ENCODE measurements at regions of chr19 and their contacts with region 1.

Region 1: GRCh38 chr19:1490311-1491113 is at the start of gene PCSK4:
- DNase-seq: peak; percentile 99
- ATAC-seq: peak; percentile 96
- H3K4me3 ChIP-seq: peak within 1 kb of the TSS; percentile 18 to 54
- H3K27ac ChIP-seq: no peak within 1 kb of the TSS
- H3K4me1 ChIP-seq: no peaks in the 10 kb centered on the region
- H3K27me3 ChIP-seq: no peaks in the 10 kb centered on the region
- total RNA-seq, gene PCSK4: 3.1 TPM in 1 of 2 donors, not detected in the other

Region 2: DNA sequence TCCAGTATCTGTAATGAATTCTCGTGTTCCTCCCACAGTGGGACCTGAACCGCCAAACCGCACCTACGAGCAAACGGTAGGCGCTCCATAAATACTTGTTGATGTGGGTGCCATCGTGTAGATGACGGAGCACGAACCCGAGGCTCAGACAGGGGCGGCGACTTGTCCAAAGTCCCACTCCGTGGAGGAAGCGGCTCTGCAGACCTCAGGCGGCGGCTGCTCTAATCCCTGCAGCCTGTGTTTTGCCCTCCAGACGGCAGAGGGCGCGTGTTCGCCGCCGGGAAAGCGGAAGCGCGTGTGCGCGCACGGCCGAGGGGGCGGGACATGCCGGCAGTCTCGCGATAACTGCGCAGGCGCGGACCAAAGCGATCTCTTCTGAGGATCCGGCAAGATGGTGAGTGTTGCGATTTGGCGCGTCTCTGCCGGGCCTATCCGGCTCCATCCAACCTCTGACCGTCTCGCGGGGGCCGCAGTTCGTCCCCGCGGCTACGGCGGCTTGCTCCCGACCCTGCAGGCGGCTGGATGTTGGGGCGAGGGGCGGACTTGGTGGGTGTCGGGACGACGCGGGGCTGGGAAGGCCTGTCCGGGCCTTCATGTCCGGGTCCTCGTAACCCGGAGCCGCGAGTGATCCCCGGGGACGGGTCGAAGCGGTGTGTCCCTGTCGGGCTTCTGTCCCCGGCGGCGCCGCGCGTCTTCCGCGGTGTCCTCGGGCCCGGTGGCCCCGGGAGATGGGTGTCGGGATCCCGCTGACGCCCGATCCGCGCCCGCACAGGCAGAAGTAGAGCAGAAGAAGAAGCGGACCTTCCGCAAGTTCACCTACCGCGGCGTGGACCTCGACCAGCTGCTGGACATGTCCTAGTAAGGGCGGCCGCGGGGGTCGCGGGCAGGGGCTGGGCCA is 52.2 kb before region 1 on chr19 and contains the start of gene RPS15:
- intact Hi-C with region 1: loop called in 1 of 2 experiments (anchors 2 kb)
- DNase-seq: peak; percentile 97 to 99
- ATAC-seq: peak; percentile 97
- H3K4me3 ChIP-seq: peak within 1 kb of the TSS; percentile 31 to 82
- H3K27ac ChIP-seq: peak within 1 kb of the TSS in 1 of 2 donors; percentile 11
- H3K4me1 ChIP-seq: no peaks in the 10 kb centered on the region
- H3K27me3 ChIP-seq: no peaks in the 10 kb centered on the region
- total RNA-seq, gene RPS15: 707 to 750 TPM

Region 3: DNA sequence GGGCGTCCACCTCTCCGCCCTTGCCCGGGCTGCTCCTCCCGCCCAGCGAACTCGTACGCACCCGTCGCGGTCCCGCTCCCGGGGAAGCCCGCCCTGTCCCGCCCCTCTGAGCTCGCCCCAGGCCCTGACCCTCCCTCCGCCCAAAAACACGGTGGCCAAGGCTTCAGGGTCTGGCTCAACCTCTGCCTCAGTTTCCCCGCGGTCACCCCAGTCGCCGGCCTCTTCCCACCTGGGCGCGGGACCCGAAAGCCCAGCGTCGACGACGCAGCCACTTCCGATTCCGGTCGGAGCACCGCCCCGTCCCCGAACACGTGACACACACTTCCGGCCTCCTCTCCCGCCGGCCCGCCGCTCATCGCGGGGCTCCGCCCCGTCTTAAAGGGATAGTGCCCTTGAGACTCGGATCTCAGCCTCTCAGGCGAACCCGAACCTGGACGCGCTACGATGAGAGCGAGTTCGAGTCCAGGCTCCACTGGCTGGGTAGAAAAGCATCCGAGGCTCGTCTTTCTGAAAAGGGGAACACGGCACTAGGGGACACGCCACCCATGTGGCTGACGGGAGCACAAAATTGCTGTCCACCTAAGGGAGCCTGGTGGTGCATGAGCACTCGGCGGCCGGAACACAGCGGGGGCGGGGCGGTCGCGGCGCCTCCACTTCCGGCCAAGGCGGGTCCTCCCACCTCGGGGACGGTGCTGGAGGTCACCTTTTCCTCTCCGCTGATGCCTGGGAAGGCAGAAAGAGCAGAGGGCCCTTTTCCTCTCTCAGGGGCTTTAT is 11.4 kb before region 1 on chr19 and contains the start of gene C19orf25:
- intact Hi-C with region 1: loop called in 1 of 2 experiments (anchors 1 kb)
- DNase-seq: peak; percentile 97 to 99
- ATAC-seq: peak; percentile 96
- H3K4me3 ChIP-seq: peak within 1 kb of the TSS; percentile 86 to 89
- H3K27ac ChIP-seq: no peak within 1 kb of the TSS
- H3K4me1 ChIP-seq: no peaks in the 10 kb centered on the region
- H3K27me3 ChIP-seq: no peaks in the 10 kb centered on the region
- total RNA-seq, gene C19orf25: 19.7 to 26.0 TPM

Region 4: DNA sequence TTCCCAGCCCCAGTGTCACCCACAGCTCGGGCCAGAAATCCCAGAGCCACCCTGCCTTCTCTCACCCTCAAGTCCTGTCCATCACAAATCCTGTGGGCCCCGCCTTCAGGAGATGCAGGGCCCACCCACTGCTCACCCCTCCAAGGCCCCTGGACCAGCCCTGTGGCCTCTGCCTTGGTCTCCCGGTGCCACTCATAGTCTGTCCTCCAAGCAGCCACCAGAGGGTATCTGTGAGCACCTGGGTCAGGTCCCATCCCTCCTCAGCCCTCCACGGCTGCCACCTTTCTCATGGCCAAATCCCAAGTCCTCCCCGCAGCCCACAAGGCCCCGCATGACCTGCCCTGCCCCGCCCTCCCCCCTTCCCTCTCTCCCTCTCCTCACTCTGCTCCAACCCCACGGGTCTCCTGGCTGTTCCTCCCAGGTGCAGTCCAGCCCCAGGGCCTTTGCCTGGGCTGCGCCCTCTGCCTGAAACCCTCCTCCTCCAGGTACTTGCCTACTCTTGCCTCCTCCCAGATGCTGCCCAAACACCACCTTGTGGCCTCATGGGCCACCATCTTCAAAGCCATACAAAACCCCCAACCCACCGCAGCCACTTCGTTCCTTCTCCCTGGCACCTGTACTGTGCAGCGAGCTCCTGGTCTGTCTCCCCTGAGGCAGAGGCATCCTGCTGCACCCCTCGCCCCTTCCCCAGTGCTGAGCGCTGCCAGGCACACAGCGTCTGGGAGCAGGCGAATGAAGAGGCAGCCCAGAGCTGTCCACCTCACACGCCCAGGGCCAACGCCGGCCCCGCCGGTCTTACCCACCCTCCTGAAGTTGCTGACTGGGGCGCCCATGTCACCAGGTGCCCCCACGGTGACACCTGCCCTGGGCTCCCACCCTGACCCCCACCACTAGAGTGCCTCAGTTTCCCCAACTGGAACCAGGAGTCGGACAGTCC is 127.9 kb after region 1 on chr19:
- intact Hi-C with region 1: no loop called
- DNase-seq: no peak
- ATAC-seq: no peak
- H3K4me3 ChIP-seq: no peak overlapping the region
- H3K27ac ChIP-seq: no peak overlapping the region
- H3K4me1 ChIP-seq: no peaks in the 10 kb centered on the region
- H3K27me3 ChIP-seq: no peaks in the 10 kb centered on the region

Measured in aorta (tissue), 5 donors.